ENCODE measurements at regions of chr3 and their contacts with region 1.

Region 1: DNA sequence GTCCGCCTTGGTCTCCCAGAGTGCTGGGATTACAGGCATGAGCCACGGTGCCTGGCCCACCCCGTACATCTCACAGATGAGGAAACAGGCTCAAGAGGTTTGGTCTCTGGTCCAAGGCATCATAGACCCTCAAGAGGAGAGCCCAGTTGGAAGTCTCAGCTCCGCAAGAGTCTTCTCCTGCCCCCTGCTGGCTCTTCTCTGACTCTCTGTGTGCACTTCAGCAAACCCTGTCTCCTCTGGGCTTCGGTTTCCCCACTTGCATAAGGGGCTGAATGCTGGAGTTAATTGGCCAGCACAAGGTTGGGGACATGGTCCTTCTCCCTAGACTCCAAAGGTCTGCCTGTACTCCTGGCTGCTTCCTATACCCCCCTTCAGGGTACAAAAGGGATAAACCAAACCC is 3.9 kb downstream of the MST1R start:
- DNase-seq: peak; percentile 24
- H3K4me3 ChIP-seq: no peak overlapping the region
- H3K27ac ChIP-seq: no peak overlapping the region
- H3K4me1 ChIP-seq: peaks cover 6% of the 10 kb centered on the region
- H3K27me3 ChIP-seq: no peaks in the 10 kb centered on the region
- CTCF ChIP-seq: peak; percentile 37 to 59
- POLR2A ChIP-seq: no peak

Region 2: GRCh38 chr3:49703443-49703927 is 196.3 kb before region 1 on chr3:
- CTCF ChIA-PET with region 1: interaction called, 12 read pairs
- POLR2A ChIA-PET with region 1: no interaction called
- dilution Hi-C with region 1: no loop called
- intact Hi-C with region 1: no loop called
- DNase-seq: peak; percentile 59
- H3K4me3 ChIP-seq: no peak overlapping the region
- H3K27ac ChIP-seq: no peak overlapping the region
- H3K4me1 ChIP-seq: peaks cover 5% of the 10 kb centered on the region
- H3K27me3 ChIP-seq: no peaks in the 10 kb centered on the region
- CTCF ChIP-seq: peak; percentile 75 to 96
- POLR2A ChIP-seq: no peak

Region 3: DNA sequence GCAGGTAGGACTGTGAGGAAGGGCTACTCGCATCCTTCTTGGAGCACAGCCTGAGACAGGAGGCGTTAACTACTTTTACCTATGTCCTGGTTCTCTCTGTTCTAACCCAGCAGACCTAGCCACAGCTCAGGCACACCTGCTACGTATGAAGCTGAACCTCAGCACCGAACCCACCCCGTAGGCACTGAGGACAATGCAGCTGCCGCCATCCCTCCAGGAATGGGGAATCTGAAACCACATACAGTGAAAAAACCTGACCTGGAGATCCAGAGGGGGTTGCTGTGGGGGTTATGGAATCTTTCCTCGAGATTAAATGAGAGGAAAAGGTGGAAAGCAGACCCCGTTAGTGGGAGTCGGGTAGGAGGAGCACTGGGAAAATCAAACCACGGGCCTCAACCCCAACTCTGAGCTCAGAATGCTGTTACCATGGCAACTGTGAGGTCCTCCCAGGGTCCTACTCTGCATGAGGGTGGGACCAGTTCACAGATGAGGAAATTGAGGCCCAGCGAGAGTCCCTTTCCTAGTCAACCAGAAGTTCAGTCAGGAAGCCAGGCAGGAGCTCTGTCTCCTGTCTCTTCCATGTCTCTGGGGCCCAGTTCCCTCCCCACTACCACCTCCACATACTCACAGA is 10.4 kb before region 1 on chr3:
- CTCF ChIA-PET with region 1: interaction called, 11 read pairs
- POLR2A ChIA-PET with region 1: no interaction called
- dilution Hi-C with region 1: no loop called
- intact Hi-C with region 1: no loop called
- DNase-seq: no peak
- H3K4me3 ChIP-seq: no peak overlapping the region
- H3K27ac ChIP-seq: no peak overlapping the region
- H3K4me1 ChIP-seq: no peaks in the 10 kb centered on the region
- H3K27me3 ChIP-seq: no peaks in the 10 kb centered on the region
- CTCF ChIP-seq: no peak
- POLR2A ChIP-seq: no peak

Region 4: DNA sequence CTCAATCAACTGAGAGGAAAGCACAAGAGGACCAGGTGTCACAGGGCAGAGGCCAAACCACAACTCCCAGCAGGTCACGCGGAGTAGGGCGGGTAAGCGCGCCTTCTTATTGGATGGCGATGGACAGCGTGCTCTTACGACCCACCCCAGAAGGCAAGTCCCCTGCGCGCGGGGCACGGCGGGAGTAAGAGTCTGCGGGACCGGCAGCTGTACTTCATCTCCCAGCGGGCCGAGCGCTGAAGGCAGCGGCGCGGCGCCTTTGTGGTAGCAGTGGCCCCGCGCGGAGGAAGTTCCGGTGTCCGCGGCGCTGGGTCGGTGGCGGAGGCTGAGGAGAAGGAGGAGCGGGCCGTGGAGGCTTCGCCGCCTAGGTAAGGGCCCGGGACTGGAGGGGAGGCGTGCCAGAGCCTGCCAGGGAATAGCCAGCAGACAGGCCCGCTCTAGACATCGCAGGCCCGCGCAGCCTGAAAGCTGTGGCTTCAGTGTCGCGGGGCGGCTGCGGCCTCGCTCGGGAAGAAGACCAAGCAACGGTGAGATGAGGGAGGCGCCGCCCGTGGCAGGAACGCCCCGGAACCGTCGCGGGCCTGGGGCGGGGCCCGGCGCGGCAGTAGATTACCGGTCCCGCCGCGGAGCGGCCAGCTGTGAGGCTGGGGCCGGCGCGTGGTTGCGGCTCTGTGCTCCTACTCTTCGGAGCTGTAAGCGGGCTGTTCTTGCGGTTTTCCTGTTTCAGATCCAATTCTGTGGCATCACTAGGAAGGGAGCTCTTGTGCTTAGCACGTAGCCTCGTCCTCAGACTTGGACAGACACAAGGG is 40.2 kb after region 1 on chr3 and contains the start of gene RBM6:
- CTCF ChIA-PET with region 1: no interaction called
- POLR2A ChIA-PET with region 1: no interaction called
- dilution Hi-C with region 1: no loop called
- intact Hi-C with region 1: no loop called
- DNase-seq: peak; percentile 97
- H3K4me3 ChIP-seq: peak within 1 kb of the TSS; percentile 44 to 85 (median 84)
- H3K27ac ChIP-seq: peak within 1 kb of the TSS; percentile 64
- H3K4me1 ChIP-seq: peaks cover 5% of the 10 kb centered on the region
- H3K27me3 ChIP-seq: no peaks in the 10 kb centered on the region
- CTCF ChIP-seq: no peak
- POLR2A ChIP-seq: peak; percentile 98
- total RNA-seq, gene RBM6: 94.5 and 96.0 TPM in 2 replicates